Activated naive CD4-positive, alpha-beta T cell treated with anti-CD3 and anti-CD28 coated beads, Interleukin-2, amount 10 ng/mL, durations not matched to agents 7 days and 5 days (primary cell): ENCODE measurements at regions of chr15 and their contacts with region 1.

Region 1: DNA sequence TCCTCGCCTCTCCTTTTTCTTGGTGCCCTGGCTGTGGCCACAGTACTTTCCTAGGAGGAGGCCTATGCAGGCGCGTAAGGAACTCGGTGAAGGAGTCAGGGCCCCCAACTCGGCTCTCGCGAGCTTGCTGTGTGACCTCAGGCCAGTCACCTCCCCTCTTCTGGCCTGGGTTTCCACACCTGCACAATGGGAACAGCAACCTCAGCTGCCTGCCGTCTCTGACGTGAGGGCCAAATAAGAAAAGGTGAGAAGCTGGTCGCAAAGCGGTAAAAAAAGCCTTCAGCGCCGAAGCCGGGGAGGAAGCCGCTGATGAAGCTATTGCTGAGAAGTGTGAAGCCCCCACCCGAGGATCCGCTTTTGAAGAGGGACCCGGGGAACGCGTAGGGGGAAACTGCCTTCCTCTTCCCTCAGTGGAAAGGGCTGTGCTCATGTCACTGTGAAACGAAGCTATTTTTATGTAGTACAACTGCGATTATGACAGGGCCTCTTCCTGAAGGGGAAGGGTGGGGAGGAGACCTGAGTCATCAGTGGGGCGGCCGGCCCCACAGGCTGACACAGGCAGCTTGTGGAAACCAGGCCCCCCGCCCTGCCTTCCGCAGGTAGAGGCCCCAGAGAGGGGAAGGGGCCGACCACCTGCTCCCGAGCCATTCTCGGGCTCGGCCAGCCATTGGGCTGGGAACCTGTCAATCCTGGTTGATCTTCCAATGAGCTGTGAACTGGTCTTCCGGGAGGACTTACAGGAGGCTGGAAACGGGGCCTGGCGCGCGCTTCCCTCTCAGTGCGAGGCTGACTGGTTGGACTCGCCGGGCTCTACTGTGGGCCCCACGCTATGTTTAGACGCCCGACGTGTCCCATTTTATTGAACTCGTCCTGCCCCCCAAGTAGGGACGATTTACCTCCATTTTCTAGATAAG is 18.0 kb upstream of the ANKDD1A start:
- DNase-seq: peak; percentile 99
- H3K4me3 Mint-ChIP-seq: peak overlapping the region; percentile 85
- H3K27ac Mint-ChIP-seq: peak overlapping the region; percentile 100
- H3K4me1 Mint-ChIP-seq: peaks cover 75% of the 10 kb centered on the region
- H3K27me3 Mint-ChIP-seq: no peaks in the 10 kb centered on the region

Region 2: DNA sequence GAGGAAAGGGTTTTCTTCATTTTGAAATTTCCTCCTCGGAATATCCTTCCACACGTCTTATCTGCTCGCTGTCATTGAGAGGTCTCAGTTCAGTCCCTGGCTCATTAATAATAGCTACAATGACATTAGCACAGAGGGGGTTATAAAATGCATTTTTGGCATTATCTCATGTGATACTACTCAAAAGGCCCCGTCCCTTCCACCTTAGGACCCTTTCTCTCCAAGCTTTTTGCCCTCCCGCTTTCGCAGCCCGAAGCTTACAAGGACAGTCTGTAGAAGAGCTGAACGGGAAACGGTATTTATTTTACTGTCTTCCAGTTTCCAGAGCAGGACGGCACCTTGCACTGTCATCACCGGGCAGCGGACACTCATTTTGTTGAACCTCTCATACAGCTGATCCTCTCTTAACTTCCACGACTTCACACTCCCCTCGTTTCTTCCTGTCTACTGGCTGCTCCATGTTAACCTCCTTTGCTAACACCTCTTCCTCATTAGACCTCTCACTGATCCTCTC is 57.7 kb before region 1 on chr15:
- CTCF ChIA-PET with region 1: interaction called, 16 read pairs
- DNase-seq: no peak
- H3K4me3 Mint-ChIP-seq: peak overlapping the region; percentile 2
- H3K27ac Mint-ChIP-seq: peak overlapping the region; percentile 80
- H3K4me1 Mint-ChIP-seq: peaks cover 52% of the 10 kb centered on the region
- H3K27me3 Mint-ChIP-seq: peaks cover 9% of the 10 kb centered on the region

Region 3: GRCh38 chr15:64841258-64842095 is 52.3 kb before region 1 on chr15 and contains the start of gene PLEKHO2:
- CTCF ChIA-PET with region 1: interaction called, 16 read pairs
- DNase-seq: peak; percentile 97
- H3K4me3 Mint-ChIP-seq: peak within 1 kb of the TSS; percentile 99
- H3K27ac Mint-ChIP-seq: peak within 1 kb of the TSS; percentile 83
- H3K4me1 Mint-ChIP-seq: peaks cover 84% of the 10 kb centered on the region
- H3K27me3 Mint-ChIP-seq: peaks cover 9% of the 10 kb centered on the region

Region 4: DNA sequence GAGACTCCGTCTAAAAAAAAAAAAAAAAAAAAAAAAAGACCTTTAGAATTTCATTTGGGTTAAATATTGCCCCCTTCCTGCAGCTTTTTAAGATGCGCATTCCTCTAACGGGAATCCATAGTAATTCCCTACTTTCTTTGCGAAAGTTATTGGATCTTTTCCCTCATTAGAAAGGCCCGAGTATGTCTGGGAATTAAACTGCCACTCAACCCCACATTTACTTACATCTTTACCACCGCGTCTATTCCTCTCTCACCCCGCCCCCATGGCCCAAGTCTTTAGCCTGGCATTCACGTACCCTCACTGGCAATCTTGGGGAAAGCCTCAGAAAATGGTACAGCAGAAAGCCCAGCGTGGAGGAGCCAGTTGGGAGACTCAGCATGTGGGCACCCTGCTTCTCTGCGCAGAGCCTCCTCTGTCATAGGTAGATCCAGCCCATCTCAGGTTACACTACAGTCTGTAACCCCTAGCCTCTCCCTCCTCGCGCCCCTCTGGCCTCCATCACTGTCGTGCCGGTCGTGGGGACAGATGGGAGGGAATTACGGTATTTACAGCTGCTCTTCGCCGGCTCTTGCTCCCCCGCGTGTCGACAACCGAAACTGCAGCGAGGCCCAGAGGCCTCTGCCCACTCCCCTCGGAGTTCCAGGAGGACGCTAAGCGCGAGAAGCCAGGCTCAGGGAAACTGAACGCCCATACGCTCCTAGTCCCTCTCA is 11.5 kb after region 1 on chr15:
- CTCF ChIA-PET with region 1: interaction called, 10 read pairs
- DNase-seq: peak; percentile 87
- H3K4me3 Mint-ChIP-seq: peak overlapping the region; percentile 29
- H3K27ac Mint-ChIP-seq: peak overlapping the region; percentile 20
- H3K4me1 Mint-ChIP-seq: peaks cover 44% of the 10 kb centered on the region
- H3K27me3 Mint-ChIP-seq: peaks cover 12% of the 10 kb centered on the region

Region 5: GRCh38 chr15:65212097-65212496 is 318.4 kb after region 1 on chr15:
- CTCF ChIA-PET with region 1: no interaction called
- DNase-seq: peak; percentile 52
- H3K4me3 Mint-ChIP-seq: no peak overlapping the region
- H3K27ac Mint-ChIP-seq: no peak overlapping the region
- H3K4me1 Mint-ChIP-seq: no peaks in the 10 kb centered on the region
- H3K27me3 Mint-ChIP-seq: peaks cover 5% of the 10 kb centered on the region